MCF 10A (cell line): ENCODE measurements at regions of chr13 and their contacts with region 1.

Region 1: GRCh38 chr13:97344265-97345175 is 89.4 kb upstream of the RAP2A start:
- DNase-seq: peak; percentile 83
- H3K4me3 Mint-ChIP-seq: no peak overlapping the region
- H3K27ac Mint-ChIP-seq: no peak overlapping the region
- H3K4me1 Mint-ChIP-seq: no peaks in the 10 kb centered on the region
- H3K27me3 Mint-ChIP-seq: no peaks in the 10 kb centered on the region
- CTCF ChIP-seq: peak; percentile 85

Region 2: DNA sequence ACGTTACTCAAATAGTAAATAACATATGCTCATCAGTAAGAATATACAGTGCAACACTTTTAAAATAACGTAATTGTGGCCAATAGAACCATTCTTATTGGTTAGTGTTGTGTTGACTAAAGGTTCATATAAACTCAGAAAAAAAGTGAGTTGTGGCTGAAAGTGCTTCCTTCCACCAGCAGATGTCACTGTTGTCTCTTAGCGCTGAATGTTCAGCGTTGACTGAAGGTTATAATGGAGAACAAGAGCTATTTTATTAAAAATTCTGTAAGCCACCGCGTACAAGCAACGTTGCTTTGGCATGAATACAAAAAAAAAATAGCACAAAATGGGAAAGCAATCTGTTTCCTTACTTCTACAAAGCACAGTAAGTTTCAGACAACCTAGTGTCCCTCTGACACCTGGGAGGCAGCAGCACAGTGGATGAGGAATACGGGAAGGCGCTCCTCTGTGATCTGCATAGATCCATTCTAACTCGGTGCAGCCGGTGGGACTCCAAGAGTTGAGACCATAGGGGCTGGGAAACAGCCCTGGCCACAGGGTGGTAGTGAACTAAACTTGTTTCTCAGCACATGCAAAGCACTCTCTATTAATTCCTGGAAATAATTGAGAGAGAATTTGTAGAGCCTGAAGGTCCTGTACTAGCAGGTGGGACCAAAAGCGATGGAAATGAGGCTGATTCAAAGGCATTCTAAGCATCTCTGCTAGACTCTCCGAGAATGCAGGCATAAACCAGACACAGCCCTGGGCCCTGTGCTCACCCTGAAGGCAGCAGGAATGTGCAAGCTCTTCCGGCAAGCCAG is 326.3 kb before region 1 on chr13:
- CTCF ChIA-PET with region 1: interaction called, 17 read pairs
- POLR2A ChIA-PET with region 1: interaction called, 4 read pairs
- intact Hi-C with region 1: loop called (anchors 5 kb)
- DNase-seq: peak; percentile 80
- H3K4me3 Mint-ChIP-seq: peak overlapping the region; percentile 11
- H3K27ac Mint-ChIP-seq: no peak overlapping the region
- H3K4me1 Mint-ChIP-seq: no peaks in the 10 kb centered on the region
- H3K27me3 Mint-ChIP-seq: peaks cover 27% of the 10 kb centered on the region
- CTCF ChIP-seq: peak; percentile 89

Region 3: GRCh38 chr13:97124916-97125809 is 219.4 kb before region 1 on chr13:
- CTCF ChIA-PET with region 1: interaction called, 14 read pairs
- POLR2A ChIA-PET with region 1: interaction called, 4 read pairs
- intact Hi-C with region 1: no loop called
- DNase-seq: peak; percentile 89
- H3K4me3 Mint-ChIP-seq: peak overlapping the region; percentile 28
- H3K27ac Mint-ChIP-seq: peak overlapping the region; percentile 21
- H3K4me1 Mint-ChIP-seq: peaks cover 47% of the 10 kb centered on the region
- H3K27me3 Mint-ChIP-seq: no peaks in the 10 kb centered on the region
- CTCF ChIP-seq: no peak

Region 4: GRCh38 chr13:97268772-97269171 is 75.7 kb before region 1 on chr13:
- CTCF ChIA-PET with region 1: interaction called, 18 read pairs
- POLR2A ChIA-PET with region 1: interaction called, 10 read pairs
- intact Hi-C with region 1: no loop called
- DNase-seq: peak; percentile 27
- H3K4me3 Mint-ChIP-seq: no peak overlapping the region
- H3K27ac Mint-ChIP-seq: peak overlapping the region; percentile 83
- H3K4me1 Mint-ChIP-seq: peaks cover 34% of the 10 kb centered on the region
- H3K27me3 Mint-ChIP-seq: no peaks in the 10 kb centered on the region
- CTCF ChIP-seq: no peak

Region 5: DNA sequence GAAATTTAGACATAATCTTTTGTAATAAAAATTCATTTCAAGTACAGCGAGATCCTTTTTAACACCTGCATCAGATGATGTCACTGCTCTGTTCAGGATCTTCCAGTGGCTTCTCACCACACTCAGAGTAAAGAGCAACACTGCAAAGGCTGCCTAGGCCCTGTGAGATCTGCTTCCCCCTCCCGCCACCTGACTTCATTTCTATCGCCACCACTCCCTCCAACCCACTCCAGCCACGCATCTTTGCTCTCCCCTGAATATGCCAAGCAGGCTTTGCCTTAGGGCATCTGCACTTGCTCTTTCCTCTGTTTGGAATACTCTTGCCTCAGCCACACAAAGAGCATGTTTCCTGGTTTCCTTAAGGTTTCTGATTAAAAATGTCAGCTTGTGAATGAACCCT is 64.0 kb before region 1 on chr13:
- CTCF ChIA-PET with region 1: interaction called, 3 read pairs
- POLR2A ChIA-PET with region 1: interaction called, 3 read pairs
- intact Hi-C with region 1: loop called (anchors 2 kb)
- DNase-seq: peak; percentile 46
- H3K4me3 Mint-ChIP-seq: peak overlapping the region; percentile 16
- H3K27ac Mint-ChIP-seq: peak overlapping the region; percentile 81
- H3K4me1 Mint-ChIP-seq: peaks cover 63% of the 10 kb centered on the region
- H3K27me3 Mint-ChIP-seq: no peaks in the 10 kb centered on the region
- CTCF ChIP-seq: no peak

Region 6: GRCh38 chr13:97583907-97584497 is 239.5 kb after region 1 on chr13:
- CTCF ChIA-PET with region 1: no interaction called
- POLR2A ChIA-PET with region 1: no interaction called
- intact Hi-C with region 1: no loop called
- DNase-seq: no peak
- H3K4me3 Mint-ChIP-seq: no peak overlapping the region
- H3K27ac Mint-ChIP-seq: no peak overlapping the region
- H3K4me1 Mint-ChIP-seq: no peaks in the 10 kb centered on the region
- H3K27me3 Mint-ChIP-seq: no peaks in the 10 kb centered on the region
- CTCF ChIP-seq: no peak